ENCODE measurements at regions of chr22 and their contacts with region 1.

Region 1: GRCh38 chr22:19228179-19228578 is 49.6 kb upstream of the SLC25A1 start:
- DNase-seq: no peak
- ATAC-seq: no peak
- H3K4me3 ChIP-seq: no peak overlapping the region
- H3K27ac ChIP-seq: no peak overlapping the region
- H3K4me1 ChIP-seq: no peaks in the 10 kb centered on the region
- H3K27me3 ChIP-seq: no peaks in the 10 kb centered on the region
- CTCF ChIP-seq: no peak

Region 2: GRCh38 chr22:19130959-19131684 is 97.1 kb before region 1 on chr22 and contains the start of gene TSSK2:
- intact Hi-C with region 1: loop called in 1 of 3 experiments (anchors 10 kb)
- DNase-seq: peak in 2 of 6 donors; percentile 28 to 43
- ATAC-seq: no peak
- H3K4me3 ChIP-seq: no peak within 1 kb of the TSS
- H3K27ac ChIP-seq: no peak within 1 kb of the TSS
- H3K4me1 ChIP-seq: no peaks in the 10 kb centered on the region
- H3K27me3 ChIP-seq: no peaks in the 10 kb centered on the region
- CTCF ChIP-seq: no peak
- total RNA-seq, gene TSSK2: 0.08 to 0.09 TPM in 2 of 6 donors, not detected in the others

Region 3: DNA sequence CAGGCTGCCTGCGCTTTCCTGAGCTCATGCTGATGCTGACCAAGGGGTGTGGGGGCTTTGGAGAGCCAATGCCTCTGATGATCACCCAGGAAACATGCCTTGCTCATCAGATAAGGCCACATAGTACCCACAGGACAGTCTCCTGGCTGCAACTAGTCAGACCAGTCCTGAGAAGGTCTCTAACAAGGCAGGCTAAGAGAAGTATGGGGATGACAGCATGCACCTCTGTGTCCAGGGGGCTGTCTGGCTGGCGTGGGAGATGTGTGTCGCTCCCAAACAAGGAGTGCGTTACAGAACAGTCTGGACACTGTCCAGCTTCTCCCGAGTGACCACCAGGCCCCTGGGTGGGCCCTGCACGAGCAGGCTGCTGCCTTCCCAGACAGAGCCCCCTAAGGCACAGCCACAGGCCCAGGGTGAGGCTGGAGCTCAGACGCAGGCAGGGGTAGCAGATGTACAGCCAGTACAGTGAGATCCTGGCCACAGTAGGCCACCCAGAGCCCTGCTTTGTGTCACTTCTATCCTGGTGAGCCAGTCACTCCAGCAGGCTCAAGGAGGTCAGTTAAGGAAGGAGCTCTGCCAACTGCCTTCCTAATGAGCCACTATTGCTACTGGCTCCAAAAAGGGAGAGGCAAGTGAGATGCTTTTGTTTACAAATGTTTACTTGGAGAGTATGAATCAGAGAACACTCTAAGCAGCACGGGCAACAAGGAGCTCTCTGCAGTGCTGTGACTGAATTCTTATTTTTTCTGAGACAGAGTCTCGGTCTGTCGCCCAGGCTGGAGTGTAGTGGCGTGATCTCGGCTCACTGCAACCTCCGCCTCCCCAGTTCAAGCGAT is 129.3 kb after region 1 on chr22:
- intact Hi-C with region 1: loop called in 1 of 3 experiments (anchors 10 kb)
- DNase-seq: no peak
- ATAC-seq: no peak
- H3K4me3 ChIP-seq: no peak overlapping the region
- H3K27ac ChIP-seq: no peak overlapping the region
- H3K4me1 ChIP-seq: no peaks in the 10 kb centered on the region
- H3K27me3 ChIP-seq: no peaks in the 10 kb centered on the region
- CTCF ChIP-seq: no peak

Region 4: DNA sequence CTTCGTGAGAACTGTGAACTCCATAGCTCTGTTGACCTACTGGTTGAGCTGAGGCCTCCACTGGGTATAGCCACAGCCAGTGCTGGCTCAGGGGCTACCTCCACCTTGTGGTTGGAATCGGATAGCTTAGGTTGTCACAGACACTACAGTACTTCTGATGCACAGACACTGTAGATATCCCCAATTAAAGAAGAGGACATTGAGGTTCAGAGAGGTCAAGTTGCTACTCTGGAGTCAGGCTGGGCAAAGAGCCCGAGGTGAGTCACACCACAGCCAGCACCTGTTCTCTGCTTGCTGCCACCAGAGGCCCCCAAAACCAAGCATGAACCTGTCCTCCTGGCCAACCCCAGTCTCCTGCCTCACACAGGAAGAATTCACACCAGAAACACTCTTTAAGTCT is 245.4 kb after region 1 on chr22:
- intact Hi-C with region 1: no loop called
- DNase-seq: no peak
- ATAC-seq: no peak
- H3K4me3 ChIP-seq: no peak overlapping the region
- H3K27ac ChIP-seq: no peak overlapping the region
- H3K4me1 ChIP-seq: peaks cover 0 to 12% (median 7%) of the 10 kb centered on the region in 3 donors
- H3K27me3 ChIP-seq: no peaks in the 10 kb centered on the region
- CTCF ChIP-seq: no peak

Measured in pancreas (tissue), 10 donors.